ENCODE measurements at regions of chr17 and their contacts with region 1.

Region 1: GRCh38 chr17:30824356-30825145 is at the start of gene CRLF3:
- DNase-seq: peak; percentile 82 to 97 (median 90)
- ATAC-seq: peak; percentile 90
- H3K4me3 ChIP-seq: peak within 1 kb of the TSS; percentile 87
- H3K4me3 Mint-ChIP-seq: peak within 1 kb of the TSS; percentile 94
- H3K27ac ChIP-seq: peak within 1 kb of the TSS; percentile 72 to 73
- H3K27ac Mint-ChIP-seq: peak within 1 kb of the TSS; percentile 83
- H3K4me1 ChIP-seq: peaks cover 32% of the 10 kb centered on the region
- H3K4me1 Mint-ChIP-seq: peaks cover 44% of the 10 kb centered on the region
- H3K27me3 ChIP-seq: no peaks in the 10 kb centered on the region
- H3K27me3 Mint-ChIP-seq: no peaks in the 10 kb centered on the region
- CTCF ChIP-seq: peak; percentile 53
- total RNA-seq, gene CRLF3: 60.9 to 62.9 TPM

Region 2: DNA sequence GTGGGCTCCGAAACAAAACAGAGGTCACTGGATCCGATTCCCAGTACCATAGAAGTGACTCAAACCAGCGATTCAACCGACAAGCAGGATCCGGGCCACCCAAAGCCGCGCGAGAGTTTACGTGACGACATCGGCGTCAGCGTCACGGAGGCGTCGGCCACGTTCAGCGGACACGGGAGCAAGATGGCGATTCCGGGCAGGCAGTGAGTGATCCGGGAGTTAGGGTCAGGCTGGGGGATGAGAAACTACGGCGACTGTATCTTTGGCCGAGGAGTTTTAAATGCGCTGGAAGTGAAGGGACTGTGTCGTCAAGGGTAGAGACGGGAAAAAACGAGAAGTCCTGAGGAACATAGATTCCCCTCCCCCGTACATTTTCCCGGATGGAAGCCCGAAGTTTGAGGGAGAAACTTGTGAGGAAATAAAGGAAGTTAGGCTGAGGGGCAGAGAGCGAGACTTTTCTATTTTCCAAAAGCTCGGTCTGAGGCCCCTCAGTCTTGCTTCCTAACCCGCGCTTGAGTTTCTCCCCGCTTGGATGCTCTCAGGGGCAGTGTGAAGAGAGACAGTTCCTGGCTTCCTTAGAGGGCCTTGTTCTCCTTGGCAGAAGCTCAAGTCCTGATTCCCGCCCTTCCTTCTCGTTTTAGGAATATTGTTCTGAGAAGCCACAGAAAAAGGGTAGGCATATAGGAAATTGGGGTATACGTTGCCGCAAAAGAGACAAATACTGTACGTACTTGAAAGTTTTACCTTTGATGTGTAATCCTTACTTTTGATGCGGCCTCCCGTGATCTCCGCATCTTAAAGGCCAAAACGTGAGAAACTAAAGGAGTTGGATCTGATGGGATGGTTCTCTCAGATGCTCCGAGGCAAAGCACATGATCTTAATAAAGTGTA is 707.6 kb before region 1 on chr17 and contains the start of gene NSRP1:
- CTCF ChIA-PET with region 1: no interaction called
- POLR2A ChIA-PET with region 1: no interaction called
- intact Hi-C with region 1: loop called (anchors 10 kb)
- DNase-seq: peak; percentile 85 to 96 (median 90)
- ATAC-seq: peak; percentile 97
- H3K4me3 ChIP-seq: peak within 1 kb of the TSS; percentile 97
- H3K4me3 Mint-ChIP-seq: peak within 1 kb of the TSS; percentile 97
- H3K27ac ChIP-seq: peak within 1 kb of the TSS; percentile 85 to 99
- H3K27ac Mint-ChIP-seq: peak within 1 kb of the TSS; percentile 95
- H3K4me1 ChIP-seq: peaks cover 21% of the 10 kb centered on the region
- H3K4me1 Mint-ChIP-seq: peaks cover 45% of the 10 kb centered on the region
- H3K27me3 ChIP-seq: no peaks in the 10 kb centered on the region
- H3K27me3 Mint-ChIP-seq: no peaks in the 10 kb centered on the region
- CTCF ChIP-seq: no peak
- total RNA-seq, gene NSRP1: 23.8 to 25.2 TPM

Region 3: GRCh38 chr17:30378824-30379302 is 445.7 kb before region 1 on chr17 and contains the start of gene CPD:
- CTCF ChIA-PET with region 1: no interaction called
- POLR2A ChIA-PET with region 1: no interaction called
- intact Hi-C with region 1: loop called in 1 of 2 experiments (anchors 10 kb)
- DNase-seq: peak; percentile 93 to 99 (median 97)
- ATAC-seq: peak; percentile 94
- H3K4me3 ChIP-seq: peak within 1 kb of the TSS; percentile 78
- H3K4me3 Mint-ChIP-seq: peak within 1 kb of the TSS; percentile 93
- H3K27ac ChIP-seq: peak within 1 kb of the TSS; percentile 82 to 88
- H3K27ac Mint-ChIP-seq: peak within 1 kb of the TSS; percentile 93
- H3K4me1 ChIP-seq: peaks cover 38% of the 10 kb centered on the region
- H3K4me1 Mint-ChIP-seq: peaks cover 65% of the 10 kb centered on the region
- H3K27me3 ChIP-seq: no peaks in the 10 kb centered on the region
- H3K27me3 Mint-ChIP-seq: no peaks in the 10 kb centered on the region
- CTCF ChIP-seq: no peak
- total RNA-seq, gene CPD: 26.2 to 30.7 TPM

Region 4: DNA sequence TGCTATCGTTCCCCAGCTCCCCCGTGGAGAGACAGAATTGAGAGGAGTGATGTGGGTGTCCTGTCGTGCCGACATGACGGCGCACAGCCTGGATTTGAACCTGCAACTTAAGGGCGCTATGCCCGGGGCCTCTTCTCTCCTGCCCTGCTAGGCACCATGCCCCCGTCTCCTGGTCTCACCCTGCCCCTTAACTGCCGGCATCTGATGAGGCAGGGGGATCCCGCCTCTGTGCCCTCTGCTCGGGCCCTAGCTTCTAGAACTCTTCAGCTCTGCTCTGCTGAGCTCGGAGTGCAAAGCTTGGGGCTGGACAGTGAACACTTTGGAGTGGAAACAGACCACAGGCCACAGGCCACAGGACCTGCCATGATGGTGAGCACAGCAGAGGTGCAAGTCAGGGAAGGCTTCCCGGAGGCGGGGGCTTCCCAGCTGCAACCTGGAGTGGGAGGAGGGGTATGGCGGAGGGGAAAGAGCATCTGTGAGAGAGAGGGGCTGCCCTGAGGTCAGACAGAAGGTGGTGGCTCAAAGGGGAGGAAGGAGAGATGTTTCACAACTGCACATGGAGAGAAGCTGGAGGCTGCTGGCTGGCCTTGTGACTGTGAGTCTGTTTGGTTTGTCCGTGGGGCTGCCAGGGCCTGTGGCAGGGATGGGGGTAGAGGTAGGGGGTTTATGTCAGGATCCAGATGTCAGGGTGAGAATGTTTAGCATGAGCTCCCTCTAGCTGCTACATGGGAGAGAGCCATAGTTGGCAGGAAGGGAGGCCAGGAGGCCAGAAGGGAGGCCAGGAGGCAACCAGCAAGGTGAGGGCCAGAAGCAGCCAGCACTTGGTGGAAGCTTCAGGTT is 107.9 kb before region 1 on chr17:
- CTCF ChIA-PET with region 1: no interaction called
- POLR2A ChIA-PET with region 1: no interaction called
- intact Hi-C with region 1: loop called in 1 of 2 experiments (anchors 5 kb)
- DNase-seq: peak in 1 of 14 experiments; percentile 2
- ATAC-seq: no peak
- H3K4me3 ChIP-seq: no peak overlapping the region
- H3K4me3 Mint-ChIP-seq: no peak overlapping the region
- H3K27ac ChIP-seq: no peak overlapping the region
- H3K27ac Mint-ChIP-seq: no peak overlapping the region
- H3K4me1 ChIP-seq: peaks cover 11% of the 10 kb centered on the region
- H3K4me1 Mint-ChIP-seq: peaks cover 12% of the 10 kb centered on the region
- H3K27me3 ChIP-seq: no peaks in the 10 kb centered on the region
- H3K27me3 Mint-ChIP-seq: no peaks in the 10 kb centered on the region
- CTCF ChIP-seq: no peak

Region 5: GRCh38 chr17:30788918-30789317 is 35.6 kb before region 1 on chr17:
- CTCF ChIA-PET with region 1: interaction called, 11 read pairs
- POLR2A ChIA-PET with region 1: interaction called, 16 read pairs
- intact Hi-C with region 1: no loop called
- DNase-seq: no peak
- ATAC-seq: no peak
- H3K4me3 ChIP-seq: no peak overlapping the region
- H3K4me3 Mint-ChIP-seq: no peak overlapping the region
- H3K27ac ChIP-seq: no peak overlapping the region
- H3K27ac Mint-ChIP-seq: peak overlapping the region; percentile 57
- H3K4me1 ChIP-seq: peaks cover 4% of the 10 kb centered on the region
- H3K4me1 Mint-ChIP-seq: peaks cover 11% of the 10 kb centered on the region
- H3K27me3 ChIP-seq: no peaks in the 10 kb centered on the region
- H3K27me3 Mint-ChIP-seq: no peaks in the 10 kb centered on the region
- CTCF ChIP-seq: no peak

Region 6: DNA sequence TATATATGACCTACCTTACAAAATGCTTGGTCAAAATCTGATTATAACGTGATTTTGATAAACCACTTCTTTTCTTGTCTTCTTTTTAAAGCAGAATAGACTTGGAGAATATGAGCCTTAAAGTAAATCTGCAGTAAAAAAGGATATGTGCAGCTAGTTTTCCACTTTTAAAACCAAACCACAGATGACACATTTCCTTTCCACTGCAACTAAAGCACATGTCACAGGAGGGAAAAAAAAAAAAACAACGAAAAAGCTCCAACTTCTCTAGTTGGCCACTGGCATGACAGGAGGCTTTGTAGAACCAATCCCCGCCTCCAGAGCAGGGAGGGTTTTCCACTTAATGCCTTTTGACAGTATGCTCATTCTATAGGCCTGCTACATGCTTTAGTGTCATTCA is 496.9 kb after region 1 on chr17 and contains the start of gene EVI2A:
- CTCF ChIA-PET with region 1: no interaction called
- POLR2A ChIA-PET with region 1: interaction called, 4 read pairs
- intact Hi-C with region 1: loop called (anchors 10 kb)
- DNase-seq: peak; percentile 52 to 95 (median 65)
- ATAC-seq: peak; percentile 85
- H3K4me3 ChIP-seq: peak within 1 kb of the TSS; percentile 82
- H3K4me3 Mint-ChIP-seq: peak within 1 kb of the TSS; percentile 91
- H3K27ac ChIP-seq: peak within 1 kb of the TSS; percentile 83 to 87
- H3K27ac Mint-ChIP-seq: peak within 1 kb of the TSS; percentile 93
- H3K4me1 ChIP-seq: peaks cover 7% of the 10 kb centered on the region
- H3K4me1 Mint-ChIP-seq: peaks cover 45% of the 10 kb centered on the region
- H3K27me3 ChIP-seq: no peaks in the 10 kb centered on the region
- H3K27me3 Mint-ChIP-seq: no peaks in the 10 kb centered on the region
- CTCF ChIP-seq: no peak
- total RNA-seq, gene EVI2A: 37.8 to 38.4 TPM

Measured in CD4-positive, alpha-beta T cell (primary cell).